A549 (cell line): ENCODE measurements at regions of chr17 and their contacts with region 1.

Region 1: GRCh38 chr17:78947235-78948127 is 22.3 kb upstream of the TIMP2 start:
- DNase-seq: no peak
- ATAC-seq: peak in 1 of 2 experiments; percentile 30; a peak in 2 of 6 replicates
- H3K4me3 ChIP-seq: no peak overlapping the region
- H3K27ac ChIP-seq: peak overlapping the region in 1 of 2 experiments; percentile 51; a peak in 2 of 6 replicates
- H3K4me1 ChIP-seq: no peaks in the 10 kb centered on the region; the same call in 2 of the 3 replicates
- CTCF ChIP-seq: no peak
- EP300 ChIP-seq: no peak
- POLR2A ChIP-seq: no peak
- RAD21 ChIP-seq: no peak

Region 2: DNA sequence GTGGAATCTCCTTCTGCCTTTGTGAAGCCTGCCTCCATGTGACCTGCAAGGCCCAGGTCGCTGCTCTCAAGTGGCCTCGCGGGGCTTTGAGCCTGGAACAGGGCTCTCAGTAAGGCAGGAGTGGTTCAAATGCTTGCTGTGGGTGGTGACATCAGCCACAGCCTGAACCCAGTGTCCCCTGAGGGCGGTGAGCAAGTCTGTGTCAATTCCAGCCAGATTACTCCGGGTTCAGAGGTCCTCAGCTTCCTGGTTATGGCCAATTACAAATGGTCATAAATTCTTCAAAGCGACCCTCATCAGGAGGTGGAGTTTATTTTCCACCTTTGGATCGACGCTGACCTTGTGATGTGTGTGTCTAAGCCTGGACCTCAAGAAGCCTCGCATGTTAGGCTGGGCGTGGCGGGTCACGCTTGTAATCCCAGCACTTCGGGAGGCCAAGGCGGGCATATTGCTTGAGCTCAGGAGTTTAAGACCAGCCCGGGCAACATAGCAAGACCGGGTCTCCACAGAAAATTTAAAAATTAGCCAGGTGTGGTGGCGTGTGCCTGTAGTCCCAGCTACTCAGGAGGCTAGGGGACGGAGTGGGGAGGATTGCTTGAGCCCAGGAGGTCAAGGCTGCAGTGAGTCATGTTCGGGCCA is 15.0 kb after region 1 on chr17:
- CTCF ChIA-PET with region 1: interaction called, 15 read pairs
- POLR2A ChIA-PET with region 1: no interaction called
- DNase-seq: peak in 1 of 2 experiments; percentile 57
- ATAC-seq: no peak
- H3K4me3 ChIP-seq: no peak overlapping the region
- H3K27ac ChIP-seq: peak overlapping the region; percentile 5 to 54; a peak in 4 of 6 replicates
- H3K4me1 ChIP-seq: peaks cover 24% of the 10 kb centered on the region
- CTCF ChIP-seq: no peak
- EP300 ChIP-seq: no peak
- POLR2A ChIP-seq: no peak
- RAD21 ChIP-seq: no peak